Activated CD4-positive, alpha-beta memory T cell treated with anti-CD3 and anti-CD28 coated beads for 36 hours (primary cell): ENCODE measurements at regions of chr5 and their contacts with region 1.

Region 1: GRCh38 chr5:128201065-128201926 is 117.7 kb downstream of the SLC12A2 start:
- DNase-seq: peak; percentile 89
- H3K4me3 Mint-ChIP-seq: no peak overlapping the region
- H3K27ac Mint-ChIP-seq: no peak overlapping the region
- H3K4me1 Mint-ChIP-seq: peaks cover 29% of the 10 kb centered on the region
- H3K27me3 Mint-ChIP-seq: peaks cover 7% of the 10 kb centered on the region

Region 2: DNA sequence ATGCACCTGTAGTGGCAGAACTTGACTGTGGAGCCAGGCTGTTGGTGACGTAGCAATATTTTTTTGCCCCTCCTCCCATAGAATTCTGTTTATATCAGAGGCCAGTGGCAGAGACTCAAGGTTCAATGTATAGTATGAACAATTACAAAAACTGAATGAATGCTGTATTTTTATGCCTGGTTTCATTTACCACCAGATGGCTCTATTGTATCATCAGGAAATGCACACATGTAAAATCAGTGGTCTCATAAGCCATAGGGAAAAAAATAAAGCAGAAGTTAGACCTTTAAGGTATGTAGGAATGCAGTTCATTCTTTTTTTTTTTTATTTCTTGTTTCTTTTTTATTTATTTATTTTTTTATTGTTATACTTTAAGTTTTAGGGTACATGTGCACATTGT is 454.5 kb before region 1 on chr5:
- CTCF ChIA-PET with region 1: no interaction called
- POLR2A ChIA-PET with region 1: no interaction called
- intact Hi-C with region 1: loop called (anchors 2 kb)
- DNase-seq: no peak
- H3K4me3 Mint-ChIP-seq: no peak overlapping the region
- H3K27ac Mint-ChIP-seq: no peak overlapping the region
- H3K4me1 Mint-ChIP-seq: no peaks in the 10 kb centered on the region
- H3K27me3 Mint-ChIP-seq: peaks cover 6% of the 10 kb centered on the region

Region 3: DNA sequence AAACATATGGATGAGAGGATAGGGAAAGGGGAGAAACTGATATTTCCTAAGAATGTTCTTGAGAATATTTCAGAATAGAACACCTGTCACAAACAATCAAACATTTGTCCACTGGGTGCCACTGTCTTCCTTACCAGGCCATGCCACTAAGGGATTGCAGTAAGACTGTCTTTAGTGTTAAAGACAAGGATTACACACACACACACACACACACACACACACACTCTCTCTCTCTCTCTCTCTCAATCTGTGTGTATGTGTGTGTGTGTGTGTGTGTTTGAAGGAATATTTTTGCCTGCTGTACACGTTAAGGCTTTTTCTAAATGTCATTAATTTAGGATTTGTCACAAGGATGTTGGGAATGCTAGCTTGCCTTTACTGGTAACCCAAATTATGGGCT is 443.7 kb before region 1 on chr5:
- CTCF ChIA-PET with region 1: interaction called, 12 read pairs
- POLR2A ChIA-PET with region 1: no interaction called
- intact Hi-C with region 1: no loop called
- DNase-seq: peak; percentile 37
- H3K4me3 Mint-ChIP-seq: no peak overlapping the region
- H3K27ac Mint-ChIP-seq: no peak overlapping the region
- H3K4me1 Mint-ChIP-seq: no peaks in the 10 kb centered on the region
- H3K27me3 Mint-ChIP-seq: no peaks in the 10 kb centered on the region

Region 4: GRCh38 chr5:127875235-127876021 is 325.9 kb before region 1 on chr5:
- CTCF ChIA-PET with region 1: interaction called, 12 read pairs
- POLR2A ChIA-PET with region 1: no interaction called
- intact Hi-C with region 1: loop called (anchors 1 kb)
- DNase-seq: peak; percentile 44
- H3K4me3 Mint-ChIP-seq: no peak overlapping the region
- H3K27ac Mint-ChIP-seq: no peak overlapping the region
- H3K4me1 Mint-ChIP-seq: no peaks in the 10 kb centered on the region
- H3K27me3 Mint-ChIP-seq: peaks cover 8% of the 10 kb centered on the region

Region 5: GRCh38 chr5:128470638-128471037 is 269.3 kb after region 1 on chr5:
- CTCF ChIA-PET with region 1: no interaction called
- POLR2A ChIA-PET with region 1: no interaction called
- intact Hi-C with region 1: no loop called
- DNase-seq: no peak
- H3K4me3 Mint-ChIP-seq: no peak overlapping the region
- H3K27ac Mint-ChIP-seq: no peak overlapping the region
- H3K4me1 Mint-ChIP-seq: no peaks in the 10 kb centered on the region
- H3K27me3 Mint-ChIP-seq: no peaks in the 10 kb centered on the region